ENCODE measurements at regions of chr13 and their contacts with region 1.

Region 1: GRCh38 chr13:96068729-96069128 is 15.5 kb upstream of the UGGT2 start:
- DNase-seq: no peak
- H3K4me3 ChIP-seq: no peak overlapping the region
- CTCF ChIP-seq: no peak

Region 2: GRCh38 chr13:96053011-96053703 is 15.6 kb before region 1 on chr13 and contains the start of gene UGGT2:
- CTCF ChIA-PET with region 1: interaction called, 11 read pairs
- POLR2A ChIA-PET with region 1: no interaction called
- DNase-seq: peak; percentile 57
- H3K4me3 ChIP-seq: peak within 1 kb of the TSS; percentile 99
- CTCF ChIP-seq: no peak

Region 3: GRCh38 chr13:96089749-96090239 is 21.1 kb after region 1 on chr13 and contains the start of gene HS6ST3:
- CTCF ChIA-PET with region 1: no interaction called
- POLR2A ChIA-PET with region 1: no interaction called
- DNase-seq: no peak
- H3K4me3 ChIP-seq: peak within 1 kb of the TSS; percentile 52
- CTCF ChIP-seq: no peak

Region 4: DNA sequence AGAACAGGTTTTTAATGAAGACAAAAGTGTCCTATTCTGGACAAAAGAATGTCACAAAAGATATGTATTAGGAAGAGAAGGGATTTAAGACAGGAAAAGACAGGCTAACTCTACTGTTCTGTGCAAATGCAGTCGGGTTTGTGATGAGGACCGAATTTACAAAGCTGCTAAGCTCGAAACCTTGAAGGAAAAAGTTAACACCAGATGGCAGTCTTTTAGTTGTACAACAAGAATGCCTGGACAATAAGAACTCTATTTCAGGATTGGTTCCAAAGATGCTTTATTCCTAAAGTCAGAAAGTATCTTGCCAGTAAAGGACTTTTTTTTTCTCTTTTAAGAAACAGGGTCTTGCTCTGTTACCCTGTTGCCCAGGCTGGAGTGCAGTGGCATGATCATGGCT is 72.3 kb after region 1 on chr13:
- CTCF ChIA-PET with region 1: no interaction called
- POLR2A ChIA-PET with region 1: no interaction called
- DNase-seq: peak; percentile 2
- H3K4me3 ChIP-seq: no peak overlapping the region
- CTCF ChIP-seq: no peak

Measured in AG04449 (cell line).